Activated CD4-positive, alpha-beta memory T cell treated with anti-CD3 and anti-CD28 coated beads, Interleukin-2, amount 10 ng/mL, durations not matched to agents 7 days and 5 days (primary cell): ENCODE measurements at regions of chr2 and their contacts with region 1.

Region 1: DNA sequence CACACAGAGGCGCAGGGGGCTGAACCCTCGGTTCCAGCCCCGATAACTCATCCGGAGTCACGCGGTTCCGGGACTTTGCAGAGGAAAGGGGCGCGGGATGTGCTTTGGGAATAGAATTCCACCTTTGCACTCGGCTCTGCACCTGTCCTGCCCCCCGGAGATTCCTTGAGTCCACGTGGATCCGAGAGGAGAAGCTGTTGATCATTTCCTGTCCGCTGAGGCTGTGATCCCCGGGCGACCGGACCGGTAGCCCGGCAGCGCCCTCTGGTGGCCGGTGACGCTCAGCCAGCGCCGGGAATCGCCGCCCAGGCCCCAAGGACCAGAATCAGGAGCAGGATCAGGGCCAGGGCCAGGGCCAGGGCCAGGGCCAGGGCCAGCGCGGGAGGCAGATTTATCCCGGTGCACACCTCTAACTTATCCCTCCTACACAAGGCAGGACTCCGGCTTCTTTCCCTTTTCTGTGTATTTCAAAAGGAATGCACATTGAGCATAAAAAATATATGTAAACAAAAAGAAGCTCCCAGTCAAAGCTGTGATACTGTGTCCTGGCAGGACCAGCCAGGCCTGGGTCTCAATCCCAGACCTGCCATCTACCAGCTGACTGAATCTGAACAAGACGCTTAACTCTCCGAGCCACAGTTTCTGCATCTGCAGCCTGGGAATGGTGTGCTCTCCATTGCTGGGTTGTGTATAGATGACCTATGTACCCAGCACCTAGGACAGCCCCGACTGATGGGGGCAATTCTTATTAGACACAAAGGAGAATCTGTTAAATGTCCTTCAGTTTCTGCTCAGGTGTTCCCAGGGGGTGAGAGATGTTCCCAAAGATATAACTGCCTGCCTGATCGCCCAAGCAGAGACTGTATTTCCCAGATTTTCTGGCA is 8.5 kb upstream of the SPATA3 start:
- DNase-seq: peak; percentile 78
- H3K4me3 Mint-ChIP-seq: peak overlapping the region; percentile 42
- H3K27ac Mint-ChIP-seq: no peak overlapping the region
- H3K4me1 Mint-ChIP-seq: peaks cover 39% of the 10 kb centered on the region
- H3K27me3 Mint-ChIP-seq: peaks cover 39% of the 10 kb centered on the region

Region 2: GRCh38 chr2:230847883-230848388 is 139.4 kb before region 1 on chr2:
- CTCF ChIA-PET with region 1: interaction called, 11 read pairs
- POLR2A ChIA-PET with region 1: no interaction called
- DNase-seq: peak; percentile 89
- H3K4me3 Mint-ChIP-seq: no peak overlapping the region
- H3K27ac Mint-ChIP-seq: no peak overlapping the region
- H3K4me1 Mint-ChIP-seq: peaks cover 13% of the 10 kb centered on the region
- H3K27me3 Mint-ChIP-seq: peaks cover 61% of the 10 kb centered on the region

Region 3: GRCh38 chr2:230913406-230914143 is 73.8 kb before region 1 on chr2:
- CTCF ChIA-PET with region 1: interaction called, 10 read pairs
- POLR2A ChIA-PET with region 1: interaction called, 51 read pairs
- DNase-seq: no peak
- H3K4me3 Mint-ChIP-seq: no peak overlapping the region
- H3K27ac Mint-ChIP-seq: no peak overlapping the region
- H3K4me1 Mint-ChIP-seq: peaks cover 41% of the 10 kb centered on the region
- H3K27me3 Mint-ChIP-seq: peaks cover 28% of the 10 kb centered on the region

Region 4: DNA sequence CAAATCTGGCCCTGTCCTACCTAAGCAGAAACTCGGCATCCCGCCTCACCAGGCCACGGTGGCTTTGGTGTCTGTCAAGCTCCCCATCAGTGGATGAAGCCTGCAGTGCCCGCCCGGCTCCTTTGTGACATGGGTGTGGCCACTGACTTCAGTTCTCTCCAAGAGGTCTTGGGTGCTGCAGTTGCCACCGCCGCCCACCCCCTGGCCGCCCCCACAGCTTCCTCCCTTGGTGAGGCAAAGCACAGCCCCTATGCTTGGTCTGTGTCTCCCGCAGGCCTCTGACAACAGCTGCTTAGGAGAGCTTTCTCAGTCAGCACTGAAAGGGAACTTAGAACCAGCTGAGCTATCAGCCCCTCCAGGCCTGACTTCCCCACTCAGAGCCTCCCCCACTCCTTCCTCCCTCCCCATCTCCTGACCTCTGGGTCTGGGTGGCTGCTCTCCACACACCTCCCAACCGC is 39.4 kb before region 1 on chr2:
- CTCF ChIA-PET with region 1: interaction called, 6 read pairs
- POLR2A ChIA-PET with region 1: interaction called, 11 read pairs
- DNase-seq: no peak
- H3K4me3 Mint-ChIP-seq: no peak overlapping the region
- H3K27ac Mint-ChIP-seq: no peak overlapping the region
- H3K4me1 Mint-ChIP-seq: peaks cover 51% of the 10 kb centered on the region
- H3K27me3 Mint-ChIP-seq: peaks cover 8% of the 10 kb centered on the region

Region 5: DNA sequence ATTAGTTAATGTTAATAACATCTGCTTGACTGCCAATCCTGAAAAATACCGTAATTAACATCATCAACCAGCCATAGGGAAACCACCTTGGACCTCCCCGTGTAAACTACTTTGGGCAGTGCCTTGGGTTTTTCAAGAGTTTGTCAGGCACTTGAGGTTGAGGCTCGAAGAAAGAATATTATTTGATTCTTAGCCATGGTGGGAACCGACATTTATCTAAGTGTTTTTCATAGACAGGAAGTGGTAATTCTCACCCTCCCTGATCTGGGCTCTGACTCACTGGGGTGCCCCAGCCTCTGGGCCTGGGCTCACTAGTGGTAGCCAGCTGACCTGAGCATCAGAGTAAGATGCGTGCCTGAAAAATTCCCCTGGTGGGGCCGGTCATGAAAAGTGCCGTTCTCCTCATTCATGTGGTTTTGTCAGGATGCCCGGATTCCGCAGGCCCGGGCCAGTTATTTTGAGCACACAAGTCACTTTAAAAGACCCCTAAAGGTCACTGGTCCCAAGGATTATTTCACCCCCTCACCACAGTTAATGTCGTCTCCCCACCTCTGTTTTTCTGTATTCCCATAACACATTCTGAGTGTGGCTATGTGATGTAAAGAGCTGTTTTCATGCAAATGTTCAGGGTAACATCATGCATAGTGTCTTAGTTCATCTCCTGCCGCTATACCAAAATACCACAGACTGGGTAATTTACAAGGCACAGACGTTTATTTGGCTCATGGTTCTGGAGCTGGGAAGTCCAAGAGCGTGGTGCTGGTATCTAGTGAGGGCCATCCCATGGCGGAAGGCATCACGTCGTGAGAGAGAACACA is 13.1 kb before region 1 on chr2:
- CTCF ChIA-PET with region 1: interaction called, 9 read pairs
- POLR2A ChIA-PET with region 1: interaction called, 34 read pairs
- DNase-seq: peak; percentile 77
- H3K4me3 Mint-ChIP-seq: peak overlapping the region; percentile 9
- H3K27ac Mint-ChIP-seq: peak overlapping the region; percentile 78
- H3K4me1 Mint-ChIP-seq: peaks cover 60% of the 10 kb centered on the region
- H3K27me3 Mint-ChIP-seq: peaks cover 35% of the 10 kb centered on the region